Mammary epithelial cell (primary cell): ENCODE measurements at regions of chr6 and their contacts with region 1.

Region 1: GRCh38 chr6:159104163-159104925 is 59.6 kb upstream of the TAGAP start:
- DNase-seq: peak; percentile 57
- H3K4me3 ChIP-seq: no peak overlapping the region
- H3K27ac ChIP-seq: no peak overlapping the region
- H3K4me1 ChIP-seq: peaks cover 13% of the 10 kb centered on the region
- H3K27me3 ChIP-seq: no peaks in the 10 kb centered on the region
- CTCF ChIP-seq: peak; percentile 72 to 99

Region 2: GRCh38 chr6:158793432-158793831 is 310.9 kb before region 1 on chr6:
- CTCF ChIA-PET with region 1: interaction called, 9 read pairs
- dilution Hi-C with region 1: no loop called
- in situ Hi-C with region 1: loop called in 1 of 2 experiments (anchors 25 kb)
- intact Hi-C with region 1: loop called (anchors 10 kb)
- DNase-seq: no peak
- H3K4me3 ChIP-seq: no peak overlapping the region
- H3K27ac ChIP-seq: no peak overlapping the region
- H3K4me1 ChIP-seq: peaks cover 19% of the 10 kb centered on the region
- H3K27me3 ChIP-seq: no peaks in the 10 kb centered on the region
- CTCF ChIP-seq: peak; percentile 51 to 61

Region 3: DNA sequence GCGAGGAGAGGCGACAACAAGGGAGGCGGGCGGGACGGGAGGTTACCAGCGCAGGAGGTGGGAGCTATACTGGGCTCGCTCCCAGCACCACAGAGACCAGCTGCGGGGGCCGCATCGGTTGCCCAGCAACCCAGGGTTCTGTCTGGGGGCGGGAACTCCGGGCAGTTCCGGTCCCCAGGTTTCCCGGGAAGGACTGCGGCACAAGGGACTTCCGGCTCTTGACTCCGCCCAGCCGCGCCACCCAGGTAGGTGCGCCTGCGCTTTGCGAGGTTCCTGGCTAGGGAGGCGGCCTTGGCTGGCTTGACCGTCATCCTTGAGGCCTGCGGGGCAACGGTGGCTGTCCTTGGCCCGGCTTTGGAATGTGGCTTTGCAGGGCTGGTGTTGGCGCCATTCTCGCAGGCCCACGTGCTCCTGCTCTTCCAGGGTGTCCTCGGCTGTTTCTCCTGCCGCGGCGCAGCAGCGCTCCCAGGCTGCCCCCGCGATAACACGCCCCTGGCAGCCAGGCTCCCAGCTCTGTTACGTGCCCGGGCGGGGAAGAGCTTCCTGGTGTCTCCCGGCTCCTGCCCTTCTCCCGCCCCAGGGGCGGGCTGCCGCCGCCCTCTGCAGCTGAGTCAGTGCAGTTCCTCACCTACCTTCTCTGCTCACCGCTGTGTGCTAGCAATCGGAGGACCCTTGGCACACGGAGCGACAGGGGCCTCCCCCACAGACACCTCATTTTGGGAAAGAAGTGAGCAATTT is 104.5 kb before region 1 on chr6 and contains the start of gene RSPH3:
- CTCF ChIA-PET with region 1: no interaction called
- dilution Hi-C with region 1: loop called (anchors 5 kb)
- in situ Hi-C with region 1: loop called (anchors 10 kb)
- intact Hi-C with region 1: no loop called
- DNase-seq: peak; percentile 97
- H3K4me3 ChIP-seq: peak within 1 kb of the TSS; percentile 42 to 94 (median 65)
- H3K27ac ChIP-seq: peak within 1 kb of the TSS; percentile 69
- H3K4me1 ChIP-seq: peaks cover 19% of the 10 kb centered on the region
- H3K27me3 ChIP-seq: no peaks in the 10 kb centered on the region
- CTCF ChIP-seq: peak in 1 of 2 donors; percentile 37
- total RNA-seq, gene RSPH3: 12.2 to 15.6 TPM

Region 4: DNA sequence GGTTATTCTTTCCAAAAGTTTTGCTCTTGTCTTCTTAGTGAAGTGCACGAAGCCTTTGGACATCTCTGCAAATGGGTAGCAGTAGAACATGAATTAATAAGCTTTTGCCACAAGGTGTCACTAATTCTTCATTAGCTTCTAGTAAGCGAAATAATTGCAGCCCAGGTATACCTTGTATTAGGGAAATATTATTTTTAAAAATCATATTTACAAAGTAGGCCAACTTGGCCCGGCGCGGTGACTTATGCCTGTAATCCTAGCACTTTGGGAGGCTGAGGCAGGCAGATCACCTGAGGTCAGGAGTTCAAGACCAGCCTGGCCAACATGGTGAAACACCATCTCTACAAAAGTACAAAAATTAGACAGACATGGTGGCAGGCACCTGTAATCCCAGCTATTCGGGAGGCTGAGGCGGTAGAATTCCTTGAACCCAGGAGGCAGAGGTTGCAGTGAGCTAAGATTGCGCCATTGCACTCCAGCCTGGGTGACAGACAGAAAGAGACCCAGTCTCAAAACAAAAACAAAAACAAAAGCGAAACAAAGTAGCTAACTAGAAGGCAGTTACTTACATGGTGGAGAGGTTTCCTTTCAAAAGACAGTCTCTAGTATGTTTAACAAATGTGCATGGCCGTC is 95.6 kb before region 1 on chr6:
- CTCF ChIA-PET with region 1: no interaction called
- dilution Hi-C with region 1: loop called (anchors 5 kb)
- in situ Hi-C with region 1: loop called (anchors 10 kb)
- intact Hi-C with region 1: loop called (anchors 1 kb)
- DNase-seq: peak; percentile 45
- H3K4me3 ChIP-seq: no peak overlapping the region
- H3K27ac ChIP-seq: no peak overlapping the region
- H3K4me1 ChIP-seq: no peaks in the 10 kb centered on the region
- H3K27me3 ChIP-seq: no peaks in the 10 kb centered on the region
- CTCF ChIP-seq: peak; percentile 50 to 55

Region 5: DNA sequence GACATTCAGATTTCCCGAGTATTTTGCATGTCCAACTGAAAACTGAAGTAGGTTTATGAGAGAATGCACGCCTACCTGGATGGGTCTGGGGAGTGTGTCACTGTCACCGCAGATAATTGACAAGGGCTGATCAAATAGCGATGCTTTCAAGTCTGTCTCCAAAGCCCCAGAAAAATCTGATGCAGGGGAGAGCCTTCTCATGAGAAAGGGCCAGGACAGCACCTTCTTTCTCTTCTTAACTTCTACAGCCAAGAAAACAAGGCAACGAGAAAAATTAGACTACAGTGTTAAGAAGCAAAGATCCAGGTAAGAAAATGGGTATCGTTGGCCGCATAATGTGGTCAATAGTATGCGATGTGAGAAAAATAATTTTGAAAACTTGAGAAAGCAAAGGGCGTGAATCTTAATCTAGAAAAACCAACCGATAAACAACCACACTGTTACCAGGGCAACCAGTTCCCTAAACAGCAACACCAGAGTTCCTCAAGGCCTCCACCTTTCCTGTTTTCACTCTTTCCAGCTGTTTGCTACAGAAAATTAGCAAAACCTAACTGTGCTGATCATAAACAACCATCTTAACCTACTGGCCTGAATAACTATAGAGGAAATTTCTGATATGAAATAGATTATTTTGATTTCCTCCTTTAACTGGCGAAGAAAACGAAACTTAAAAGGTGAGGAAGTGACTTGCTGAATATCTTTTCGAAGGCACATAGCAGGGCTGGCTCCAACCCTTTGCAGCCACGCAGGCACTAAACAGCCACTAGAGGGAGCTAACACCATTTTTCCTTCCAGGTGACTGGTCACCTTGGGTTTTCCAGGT is 62.1 kb before region 1 on chr6:
- CTCF ChIA-PET with region 1: interaction called, 10 read pairs
- dilution Hi-C with region 1: no loop called
- in situ Hi-C with region 1: loop called (anchors 5 kb)
- intact Hi-C with region 1: loop called (anchors 1 kb)
- DNase-seq: peak; percentile 84
- H3K4me3 ChIP-seq: no peak overlapping the region
- H3K27ac ChIP-seq: peak overlapping the region; percentile 74
- H3K4me1 ChIP-seq: peaks cover 27% of the 10 kb centered on the region
- H3K27me3 ChIP-seq: no peaks in the 10 kb centered on the region
- CTCF ChIP-seq: peak; percentile 94 to 99

Region 6: GRCh38 chr6:159084493-159085091 is 19.8 kb before region 1 on chr6:
- CTCF ChIA-PET with region 1: interaction called, 16 read pairs
- dilution Hi-C with region 1: no loop called
- in situ Hi-C with region 1: no loop called
- intact Hi-C with region 1: no loop called
- DNase-seq: peak; percentile 65
- H3K4me3 ChIP-seq: no peak overlapping the region
- H3K27ac ChIP-seq: no peak overlapping the region
- H3K4me1 ChIP-seq: no peaks in the 10 kb centered on the region
- H3K27me3 ChIP-seq: no peaks in the 10 kb centered on the region
- CTCF ChIP-seq: no peak

Region 7: DNA sequence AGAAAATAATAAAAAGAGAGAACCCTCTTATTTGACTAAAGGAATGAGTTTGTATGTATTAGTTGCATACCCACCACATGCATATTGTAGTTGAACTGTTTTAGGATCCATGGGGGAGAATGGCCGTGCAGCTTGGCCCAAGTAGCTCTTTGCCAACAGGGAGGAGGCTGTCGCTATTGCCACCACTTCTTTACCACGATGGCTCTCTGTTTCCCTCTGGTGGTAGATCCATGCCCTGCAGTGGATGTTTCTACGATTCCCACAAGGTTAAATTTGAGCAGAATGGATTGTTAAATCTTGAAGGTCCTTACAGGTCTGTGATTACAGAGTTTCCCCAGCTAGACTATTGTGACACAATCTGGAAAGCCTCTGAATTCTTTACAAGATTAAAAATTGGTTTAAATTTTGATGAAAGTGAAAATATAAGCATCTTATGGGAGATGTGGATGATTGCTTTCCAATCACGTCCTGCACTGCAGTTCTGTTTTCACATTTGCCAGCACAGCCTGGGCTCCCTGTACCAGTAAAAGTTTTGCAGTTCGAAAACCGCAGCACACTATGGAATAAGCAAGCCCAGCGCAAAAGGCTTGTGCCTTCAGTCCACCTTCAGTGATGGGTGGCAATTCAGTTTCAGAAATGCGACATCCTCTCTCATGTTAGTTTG is 30.5 kb after region 1 on chr6:
- CTCF ChIA-PET with region 1: interaction called, 6 read pairs
- dilution Hi-C with region 1: no loop called
- in situ Hi-C with region 1: no loop called
- intact Hi-C with region 1: loop called (anchors 1 kb)
- DNase-seq: peak; percentile 36
- H3K4me3 ChIP-seq: no peak overlapping the region
- H3K27ac ChIP-seq: no peak overlapping the region
- H3K4me1 ChIP-seq: no peaks in the 10 kb centered on the region
- H3K27me3 ChIP-seq: no peaks in the 10 kb centered on the region
- CTCF ChIP-seq: peak; percentile 98 to 99

Region 8: GRCh38 chr6:159463119-159463829 is 358.9 kb after region 1 on chr6:
- CTCF ChIA-PET with region 1: no interaction called
- dilution Hi-C with region 1: no loop called
- in situ Hi-C with region 1: no loop called
- intact Hi-C with region 1: no loop called
- DNase-seq: peak; percentile 11
- H3K4me3 ChIP-seq: no peak overlapping the region
- H3K27ac ChIP-seq: no peak overlapping the region
- H3K4me1 ChIP-seq: no peaks in the 10 kb centered on the region
- H3K27me3 ChIP-seq: peaks cover 2% of the 10 kb centered on the region
- CTCF ChIP-seq: peak; percentile 27 to 31